H1 (cell line): ENCODE measurements at regions of chr19 and their contacts with region 1.

Region 1: DNA sequence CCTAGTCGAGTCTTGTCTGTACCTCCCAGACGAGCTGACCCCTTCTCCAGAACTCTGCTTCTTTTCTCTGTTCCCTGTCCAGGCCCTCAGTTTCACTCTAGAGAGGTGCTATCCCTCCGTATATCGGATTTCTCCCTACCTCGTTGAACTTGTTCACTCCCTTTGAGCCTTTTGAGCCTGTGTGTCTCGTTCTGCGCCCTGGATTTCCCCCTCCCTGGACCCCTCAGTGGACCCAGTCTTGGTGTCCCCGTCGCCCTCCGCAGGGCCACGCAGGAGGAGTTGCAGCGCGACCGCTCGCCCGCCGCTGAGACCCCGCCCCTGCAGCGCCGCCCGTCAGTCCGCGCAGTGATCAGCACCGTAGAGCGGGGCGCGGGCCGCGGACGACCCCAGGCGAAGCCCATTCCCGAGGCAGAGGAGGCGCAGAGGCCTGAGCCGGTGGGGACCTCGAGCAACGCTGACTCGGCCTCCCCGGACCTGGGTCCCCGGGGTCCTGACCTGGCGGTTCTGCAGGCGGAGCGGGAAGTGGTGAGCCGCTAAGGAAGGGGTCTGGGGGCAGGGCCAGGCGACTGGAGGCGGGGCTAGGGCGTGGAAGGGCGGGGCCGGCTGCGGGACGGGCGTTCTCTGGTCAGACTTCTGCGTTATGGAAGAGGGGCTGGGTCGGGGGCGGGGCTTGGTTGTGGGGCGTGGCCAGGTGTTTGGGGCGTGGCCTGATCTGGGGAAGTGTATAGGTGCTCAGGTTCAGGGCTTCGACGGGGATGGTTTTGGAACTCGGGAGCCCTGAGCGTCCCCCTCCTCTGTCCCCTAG is 5.5 kb downstream of the EPS8L1 start:
- DNase-seq: peak; percentile 92 to 99
- H3K4me3 ChIP-seq: peak overlapping the region; percentile 52 to 77 (median 62)
- H3K27ac ChIP-seq: no peak overlapping the region
- H3K4me1 ChIP-seq: peaks cover 0 to 19% (median 13%) of the 10 kb centered on the region in 4 experiments; a peak in 6 of 7 replicates
- H3K27me3 ChIP-seq: peaks cover 0 to 13% (median 9%) of the 10 kb centered on the region in 4 experiments; a peak in 5 of 7 replicates
- CTCF ChIP-seq: no peak
- EP300 ChIP-seq: no peak
- POLR2A ChIP-seq: no peak; a peak in 1 of 3 replicates
- RAD21 ChIP-seq: no peak

Region 2: DNA sequence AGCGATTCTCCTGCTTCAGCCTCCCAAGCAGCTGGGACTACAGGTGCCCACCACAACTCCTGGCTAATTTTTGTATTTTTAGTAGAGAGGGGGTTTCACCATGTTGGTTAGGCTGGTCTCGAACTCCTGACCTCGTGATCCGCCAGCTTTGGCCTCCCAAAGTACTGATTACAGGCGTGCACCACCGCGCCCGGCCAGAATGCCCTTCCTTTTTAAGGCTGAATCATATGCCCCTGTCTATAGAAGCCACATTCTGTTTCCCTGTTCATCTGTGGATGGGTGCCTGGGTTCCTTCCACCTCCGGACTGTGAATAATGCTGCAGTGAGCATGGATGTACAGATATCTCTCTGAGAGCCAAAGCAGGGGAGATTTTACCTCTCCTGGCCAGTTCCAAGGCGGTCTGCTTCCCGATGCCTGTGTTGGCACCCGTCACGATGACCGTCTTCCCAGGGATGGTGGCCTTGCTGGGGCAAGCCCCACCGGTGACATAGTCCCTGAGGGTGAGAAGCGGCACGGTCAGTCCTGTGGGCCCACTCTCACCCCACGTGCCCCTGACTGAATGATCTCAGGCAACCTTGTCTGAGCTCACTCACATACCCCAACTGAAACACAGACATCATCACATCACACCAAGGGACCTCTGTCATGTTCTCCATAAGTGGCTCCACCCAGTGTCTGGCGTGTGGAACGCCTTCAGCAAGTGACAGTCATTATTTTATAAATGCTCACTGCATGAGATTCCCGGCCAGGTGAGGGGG is 22.2 kb before region 1 on chr19:
- CTCF ChIA-PET with region 1: interaction called, 3 read pairs
- POLR2A ChIA-PET with region 1: interaction called, 10 read pairs
- DNase-seq: no peak
- H3K4me3 ChIP-seq: no peak overlapping the region
- H3K27ac ChIP-seq: no peak overlapping the region
- H3K4me1 ChIP-seq: peaks cover 0 to 4% (median 2%) of the 10 kb centered on the region in 4 experiments; a peak in 4 of 7 replicates
- H3K27me3 ChIP-seq: peaks cover 0 to 5% (median 2%) of the 10 kb centered on the region in 4 experiments; a peak in 4 of 7 replicates
- CTCF ChIP-seq: peak in 2 of 3 experiments; percentile 17 to 18; a peak in 2 of 4 replicates
- EP300 ChIP-seq: no peak
- POLR2A ChIP-seq: no peak
- RAD21 ChIP-seq: peak in 1 of 2 experiments; percentile 26; a peak in 1 of 4 replicates

Region 3: DNA sequence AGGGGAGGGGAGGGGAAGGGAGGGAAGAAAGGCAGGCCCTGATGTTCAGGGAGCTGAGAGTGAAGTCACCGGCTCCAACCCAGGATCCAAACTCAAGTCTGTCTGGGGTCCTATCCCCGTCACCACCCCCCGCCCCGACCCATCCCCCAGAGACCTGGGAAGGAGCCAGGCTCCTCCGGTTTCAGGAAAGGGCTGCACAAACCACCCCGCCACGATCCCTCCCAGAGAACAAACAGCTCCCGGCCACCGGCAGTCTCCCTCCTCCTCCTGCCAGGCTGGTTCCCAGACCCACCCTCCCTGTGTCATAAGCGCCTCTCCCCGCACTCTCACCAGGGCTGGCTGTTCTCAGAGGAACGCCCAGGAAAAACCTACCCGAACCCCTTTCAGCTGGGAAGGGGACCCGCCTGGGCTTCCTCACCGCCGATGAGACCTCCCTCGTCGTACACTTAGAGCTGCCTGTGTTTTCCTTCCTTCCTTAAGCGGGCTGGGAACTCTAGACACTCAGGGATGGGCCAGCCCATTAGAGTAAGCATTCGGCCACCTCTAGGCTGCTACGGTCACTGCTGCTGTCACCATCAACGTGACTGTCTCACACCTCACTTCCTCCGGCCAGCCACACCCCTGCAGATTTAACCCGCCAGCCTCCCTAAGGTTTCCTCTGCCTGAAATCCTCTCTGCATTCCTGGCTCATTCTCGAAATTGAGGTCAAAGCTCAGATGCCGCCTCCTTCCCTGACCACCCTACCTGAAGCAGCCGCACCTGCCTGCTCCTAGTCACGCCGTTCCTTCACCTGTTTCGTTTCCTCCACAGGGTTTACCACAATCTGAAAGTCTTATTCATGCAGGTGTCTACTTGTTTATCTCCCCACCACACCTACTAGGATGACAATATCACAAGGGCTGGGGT is 12.0 kb before region 1 on chr19:
- CTCF ChIA-PET with region 1: interaction called, 3 read pairs
- POLR2A ChIA-PET with region 1: interaction called, 33 read pairs
- DNase-seq: peak in 1 of 2 experiments; percentile 68
- H3K4me3 ChIP-seq: peak overlapping the region; percentile 16 to 60 (median 42)
- H3K27ac ChIP-seq: no peak overlapping the region
- H3K4me1 ChIP-seq: peaks cover 0 to 10% (median 5%) of the 10 kb centered on the region in 4 experiments; a peak in 6 of 7 replicates
- H3K27me3 ChIP-seq: peaks cover 18 to 82% (median 59%) of the 10 kb centered on the region in 4 experiments
- CTCF ChIP-seq: no peak
- EP300 ChIP-seq: no peak
- POLR2A ChIP-seq: no peak
- RAD21 ChIP-seq: 0 out of 4 replicates have a peak, but pooled peaks of 1 of the 2 experiments have one; percentile 1

Region 4: DNA sequence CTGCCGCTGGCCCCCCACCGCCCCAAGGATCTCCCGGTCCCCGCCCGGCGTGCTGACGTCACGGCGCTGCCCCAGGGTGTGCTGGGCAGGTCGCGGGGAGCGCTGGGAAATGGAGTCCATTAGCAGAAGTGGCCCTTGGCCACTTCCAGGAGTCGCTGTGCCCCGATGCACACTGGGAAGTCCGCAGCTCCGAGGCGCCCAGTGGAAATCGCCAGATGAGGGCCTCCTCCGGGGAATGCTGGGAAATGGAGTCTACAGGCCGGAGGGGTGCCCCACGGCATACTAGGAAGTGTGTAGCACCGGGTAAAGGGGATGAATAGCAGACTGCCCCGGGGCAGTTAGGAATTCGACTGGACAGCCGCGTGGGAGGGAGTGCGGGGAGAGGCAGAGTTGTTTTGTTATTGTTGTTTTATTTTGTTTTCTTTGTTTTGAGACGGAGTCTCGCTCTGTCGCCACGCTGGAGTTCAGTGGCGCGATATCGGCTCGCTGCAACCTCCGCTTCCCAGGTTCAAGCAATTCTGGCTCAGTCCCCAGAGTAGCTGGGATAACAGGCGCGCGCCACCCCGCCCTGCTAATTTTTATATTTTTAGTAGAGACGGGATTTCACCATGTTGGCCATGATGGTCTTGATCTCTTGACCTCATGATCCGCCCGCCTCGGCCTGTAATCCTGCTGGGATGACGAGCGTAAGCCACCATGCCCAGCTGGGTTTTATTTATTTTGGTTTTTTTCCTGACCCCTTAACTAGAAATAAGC is 36.6 kb after region 1 on chr19 and contains the start of gene PPP1R12C:
- CTCF ChIA-PET with region 1: no interaction called
- POLR2A ChIA-PET with region 1: interaction called, 72 read pairs
- DNase-seq: peak; percentile 92 to 93
- H3K4me3 ChIP-seq: peak within 1 kb of the TSS; percentile 83 to 92 (median 88)
- H3K27ac ChIP-seq: 0 out of 2 replicates have a peak within 1 kb of the TSS, but pooled peaks have one; percentile 46
- H3K4me1 ChIP-seq: peaks cover 0 to 23% (median 17%) of the 10 kb centered on the region in 4 experiments; a peak in 5 of 7 replicates
- H3K27me3 ChIP-seq: no peaks in the 10 kb centered on the region
- CTCF ChIP-seq: no peak
- EP300 ChIP-seq: no peak; a peak in 1 of 3 replicates
- POLR2A ChIP-seq: no peak
- RAD21 ChIP-seq: no peak
- total RNA-seq, gene PPP1R12C: 71.5 and 88.8 TPM in 2 replicates